ENCODE measurements at regions of chr2 and their contacts with region 1.

Region 1: GRCh38 chr2:199495149-199495548 is 37.4 kb upstream of the SATB2 start:
- DNase-seq: no peak
- H3K4me3 ChIP-seq: no peak overlapping the region
- H3K27ac ChIP-seq: no peak overlapping the region
- H3K4me1 ChIP-seq: no peaks in the 10 kb centered on the region
- H3K27me3 ChIP-seq: no peaks in the 10 kb centered on the region
- CTCF ChIP-seq: no peak
- EP300 ChIP-seq: no peak
- POLR2A ChIP-seq: no peak

Region 2: GRCh38 chr2:198309673-198310280 is 1185.4 kb before region 1 on chr2:
- intact Hi-C with region 1: loop called in 1 of 4 experiments (anchors 10 kb)
- DNase-seq: peak in 3 of 5 donors; percentile 22 to 31 (median 26)
- H3K4me3 ChIP-seq: no peak overlapping the region
- H3K27ac ChIP-seq: no peak overlapping the region
- H3K4me1 ChIP-seq: no peaks in the 10 kb centered on the region
- H3K27me3 ChIP-seq: no peaks in the 10 kb centered on the region
- CTCF ChIP-seq: peak in 2 of 3 donors; percentile 26 to 38
- EP300 ChIP-seq: no peak
- POLR2A ChIP-seq: no peak

Region 3: DNA sequence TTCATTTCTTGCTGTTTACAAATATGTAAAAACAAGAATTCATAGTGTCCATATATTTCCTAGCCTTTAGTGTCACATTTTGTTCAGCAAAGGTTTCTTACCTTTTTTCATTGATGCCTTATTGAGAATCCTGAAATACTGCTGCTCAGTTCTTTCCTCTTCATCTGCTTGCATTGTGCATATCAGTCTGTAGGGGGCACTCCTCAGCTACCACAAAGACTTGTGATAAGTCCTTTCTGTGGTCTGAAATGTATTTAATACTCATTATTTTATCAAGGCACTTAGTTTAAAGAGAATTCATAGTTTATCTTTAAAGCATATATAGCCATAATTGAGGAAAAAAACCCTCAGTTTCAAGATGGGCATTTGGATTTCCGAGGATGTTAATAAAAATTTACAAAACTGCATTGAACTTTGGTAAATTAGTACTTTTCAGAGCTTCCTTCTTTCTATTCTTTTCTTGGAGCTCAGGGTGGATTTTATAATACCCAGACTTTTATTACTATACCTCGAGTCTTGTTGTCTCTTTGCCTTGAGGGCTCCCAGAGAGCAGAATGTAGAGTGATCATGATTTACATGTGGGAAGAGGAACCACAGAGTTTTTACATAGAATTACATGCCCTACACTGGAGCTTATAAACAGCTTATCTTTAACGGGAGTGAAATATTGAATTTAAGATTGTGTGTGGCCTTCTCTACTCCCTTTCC is 1120.6 kb before region 1 on chr2:
- intact Hi-C with region 1: loop called in 1 of 4 experiments (anchors 5 kb)
- DNase-seq: no peak
- H3K4me3 ChIP-seq: no peak overlapping the region
- H3K27ac ChIP-seq: no peak overlapping the region
- H3K4me1 ChIP-seq: no peaks in the 10 kb centered on the region
- H3K27me3 ChIP-seq: no peaks in the 10 kb centered on the region
- CTCF ChIP-seq: no peak
- EP300 ChIP-seq: no peak
- POLR2A ChIP-seq: no peak

Measured in ovary (tissue), 10 donors.